ENCODE measurements at regions of chr2 and their contacts with region 1.

Region 1: DNA sequence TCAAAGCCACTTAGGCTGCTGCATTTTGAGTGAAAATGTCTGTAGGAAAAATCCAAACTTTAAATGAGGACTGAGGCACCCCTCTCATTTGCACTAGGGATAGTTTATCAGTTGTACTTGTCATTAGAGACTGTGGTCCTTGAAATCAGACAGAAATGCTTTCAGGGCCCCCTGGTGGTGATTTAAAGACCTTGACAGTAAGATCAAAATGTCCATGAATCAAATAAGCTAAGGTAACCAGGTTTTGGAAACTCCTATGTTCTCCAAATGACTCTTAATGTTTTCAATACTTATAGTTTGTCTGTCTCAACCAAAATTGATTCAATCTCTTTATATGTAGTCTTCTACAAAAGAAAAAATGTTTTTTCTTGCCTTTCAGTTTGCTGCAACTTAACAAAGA is 28.8 kb upstream of the DDX18 start:
- DNase-seq: peak; percentile 68
- ATAC-seq: peak; percentile 51
- H3K4me3 ChIP-seq: no peak overlapping the region
- H3K27ac ChIP-seq: no peak overlapping the region
- H3K4me1 ChIP-seq: no peaks in the 10 kb centered on the region
- H3K27me3 ChIP-seq: no peaks in the 10 kb centered on the region
- CTCF ChIP-seq: peak; percentile 79

Region 2: DNA sequence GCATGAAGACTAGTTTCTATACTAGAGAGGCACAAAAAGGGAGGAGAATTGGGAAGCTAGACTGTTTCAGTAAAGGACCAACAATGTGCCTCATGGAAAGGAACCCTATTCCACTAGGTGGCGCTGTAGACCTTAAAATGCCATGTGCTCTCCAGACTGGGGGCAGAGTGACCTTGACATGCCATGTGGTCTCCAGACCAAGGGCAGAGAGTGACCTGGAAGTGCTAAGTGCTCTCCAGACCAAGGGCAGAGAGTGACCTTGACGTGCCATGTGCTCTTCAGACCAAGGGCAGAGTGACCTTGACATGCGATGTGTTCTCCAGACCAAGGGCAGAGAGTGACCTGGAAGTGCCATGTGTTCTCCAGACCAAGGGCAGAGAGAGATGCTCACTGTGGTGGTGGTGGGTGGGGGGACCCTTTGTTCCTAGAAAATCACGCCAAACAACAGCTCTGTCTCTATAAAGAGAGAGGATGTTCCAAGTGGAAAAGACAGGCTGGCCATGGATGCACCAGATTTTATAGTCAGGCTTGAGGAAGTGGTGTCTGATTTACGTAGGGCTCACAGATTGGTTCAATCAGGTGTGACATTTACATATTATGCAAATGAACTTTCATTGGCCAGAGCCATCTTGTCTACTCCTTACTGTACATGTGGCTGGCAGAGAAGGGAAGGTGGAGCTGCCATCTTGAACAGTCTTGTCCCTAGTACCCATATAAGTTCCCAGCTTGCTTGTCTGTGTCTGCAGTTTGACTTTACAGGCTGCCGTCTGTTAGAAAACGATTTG is 315.2 kb before region 1 on chr2:
- CTCF ChIA-PET with region 1: no interaction called
- POLR2A ChIA-PET with region 1: no interaction called
- intact Hi-C with region 1: loop called (anchors 5 kb)
- DNase-seq: peak; percentile 43
- ATAC-seq: no peak
- H3K4me3 ChIP-seq: no peak overlapping the region
- H3K27ac ChIP-seq: no peak overlapping the region
- H3K4me1 ChIP-seq: no peaks in the 10 kb centered on the region
- H3K27me3 ChIP-seq: no peaks in the 10 kb centered on the region
- CTCF ChIP-seq: peak; percentile 77

Region 3: DNA sequence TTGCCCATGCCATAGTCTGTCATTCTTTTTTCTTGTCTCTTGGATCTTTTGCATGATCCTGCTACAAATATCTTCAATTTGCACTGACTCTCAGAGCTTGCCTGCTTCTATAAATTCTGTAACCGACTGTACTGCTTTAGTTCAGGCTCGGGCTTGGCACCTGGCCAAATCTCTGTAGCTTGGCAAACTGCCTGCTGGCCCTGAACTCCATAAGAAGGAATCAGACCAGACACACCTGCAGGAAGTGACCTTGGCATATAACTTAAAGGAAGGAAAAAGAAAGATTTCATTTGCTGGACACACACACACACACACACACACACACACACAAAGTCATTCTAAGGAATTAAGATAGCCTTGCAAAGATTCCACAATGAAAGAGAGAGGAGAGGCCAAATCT is 262.5 kb before region 1 on chr2:
- CTCF ChIA-PET with region 1: no interaction called
- POLR2A ChIA-PET with region 1: no interaction called
- intact Hi-C with region 1: no loop called
- DNase-seq: peak; percentile 41
- ATAC-seq: no peak
- H3K4me3 ChIP-seq: no peak overlapping the region
- H3K27ac ChIP-seq: no peak overlapping the region
- H3K4me1 ChIP-seq: no peaks in the 10 kb centered on the region
- H3K27me3 ChIP-seq: no peaks in the 10 kb centered on the region
- CTCF ChIP-seq: no peak

Measured in PC-3 (cell line).